A549 (cell line): ENCODE measurements at regions of chr16 and their contacts with region 1.

Region 1: DNA sequence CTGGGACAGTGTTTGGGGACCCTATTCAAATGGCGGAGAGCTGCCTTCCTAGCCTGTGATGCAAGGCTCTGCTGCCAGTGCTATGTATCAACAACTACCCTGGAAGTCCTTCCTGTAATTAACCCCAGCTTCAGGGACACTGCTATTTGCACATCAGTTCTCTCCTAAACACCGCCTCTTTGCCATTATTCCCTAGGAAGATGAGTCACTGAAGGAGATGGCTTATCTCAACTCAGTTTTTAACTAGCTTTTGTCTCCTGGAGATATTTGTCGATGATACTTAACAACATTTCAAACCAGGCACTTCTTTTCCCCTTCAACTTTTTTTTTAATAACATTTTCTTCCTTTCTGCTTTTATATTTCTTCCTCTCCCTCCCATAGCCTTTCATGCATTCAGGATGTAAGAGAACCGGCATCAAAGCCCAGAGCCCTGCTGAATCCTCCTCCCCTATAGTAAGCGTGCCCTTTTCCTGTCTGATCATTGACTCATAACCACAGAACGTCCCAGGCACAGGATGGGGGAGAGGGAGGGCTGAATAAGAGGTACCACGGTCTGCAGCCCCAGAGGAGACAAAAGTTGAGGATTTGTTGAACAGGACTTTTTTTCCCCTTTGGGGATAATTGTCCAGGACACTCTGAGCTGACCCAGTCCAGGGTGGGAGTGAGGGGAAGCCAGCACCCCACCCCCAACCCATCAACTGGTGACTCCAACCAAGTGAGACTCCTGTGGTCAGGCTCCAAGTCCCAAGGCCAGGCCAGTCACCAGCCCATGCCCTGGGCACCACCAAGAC is 387.8 kb upstream of the SALL1 start:
- DNase-seq: peak; percentile 88
- ATAC-seq: peak; percentile 97 to 98
- H3K4me3 ChIP-seq: no peak overlapping the region
- H3K27ac ChIP-seq: peak overlapping the region; percentile 92 to 93
- H3K4me1 ChIP-seq: peaks cover 28% of the 10 kb centered on the region
- CTCF ChIP-seq: no peak
- EP300 ChIP-seq: peak; percentile 21 to 70; a peak in 3 of 5 replicates
- POLR2A ChIP-seq: no peak
- RAD21 ChIP-seq: peak in 1 of 2 experiments; percentile 11; a peak in 2 of 5 replicates

Region 2: GRCh38 chr16:51524555-51525373 is 14.1 kb before region 1 on chr16:
- CTCF ChIA-PET with region 1: interaction called, 13 read pairs
- POLR2A ChIA-PET with region 1: interaction called, 3 read pairs
- DNase-seq: peak; percentile 26 to 59
- ATAC-seq: peak; percentile 66 to 71; a peak in 4 of 6 replicates
- H3K4me3 ChIP-seq: no peak overlapping the region
- H3K27ac ChIP-seq: peak overlapping the region; percentile 63 to 79
- H3K4me1 ChIP-seq: peaks cover 22% of the 10 kb centered on the region
- CTCF ChIP-seq: peak; percentile 26; the same call in 1 of the 3 replicates
- EP300 ChIP-seq: no peak
- POLR2A ChIP-seq: no peak
- RAD21 ChIP-seq: peak; percentile 30 to 34; a peak in 1 of 5 replicates

Region 3: DNA sequence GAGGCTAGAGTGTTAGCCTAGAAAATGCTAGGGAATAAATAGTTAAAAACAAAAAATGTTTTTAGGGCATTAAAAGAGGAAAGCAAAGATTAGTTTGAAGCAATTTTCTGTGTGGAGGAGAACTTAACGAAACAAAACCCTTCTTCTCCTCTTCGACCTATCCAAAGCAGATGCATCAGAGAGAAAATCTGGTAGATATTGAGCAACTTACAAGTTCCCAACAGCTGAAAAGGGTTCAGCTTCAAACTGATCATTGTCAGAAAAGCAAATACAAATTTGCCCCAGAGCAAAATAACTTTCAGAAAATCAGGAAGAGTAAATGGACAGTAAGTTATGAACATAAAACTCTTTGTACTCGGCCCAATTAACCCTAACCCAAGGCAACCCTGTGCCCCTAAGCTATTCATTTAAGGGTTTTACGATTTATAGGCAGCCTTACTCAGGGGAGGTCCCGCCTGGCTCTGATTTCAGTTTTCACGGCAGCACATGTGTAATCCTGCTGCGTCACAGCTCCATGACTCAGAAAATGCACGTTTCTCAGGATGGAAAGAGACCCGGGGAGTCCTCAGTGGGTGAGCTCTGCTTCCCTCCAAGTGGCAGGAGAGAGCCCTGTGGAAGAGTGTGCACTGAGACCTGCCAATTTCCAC is 17.9 kb after region 1 on chr16:
- CTCF ChIA-PET with region 1: interaction called, 9 read pairs
- POLR2A ChIA-PET with region 1: interaction called, 11 read pairs
- DNase-seq: peak; percentile 79 to 92
- ATAC-seq: peak; percentile 97
- H3K4me3 ChIP-seq: peak overlapping the region; percentile 11; the same call in 1 of the 3 replicates
- H3K27ac ChIP-seq: peak overlapping the region; percentile 84 to 86
- H3K4me1 ChIP-seq: peaks cover 21% of the 10 kb centered on the region
- CTCF ChIP-seq: no peak
- EP300 ChIP-seq: peak; percentile 80 to 94
- POLR2A ChIP-seq: no peak
- RAD21 ChIP-seq: peak in 1 of 2 experiments; percentile 65; a peak in 3 of 5 replicates